Mammary epithelial cell (primary cell): ENCODE measurements at regions of chr12 and their contacts with region 1.

Region 1: DNA sequence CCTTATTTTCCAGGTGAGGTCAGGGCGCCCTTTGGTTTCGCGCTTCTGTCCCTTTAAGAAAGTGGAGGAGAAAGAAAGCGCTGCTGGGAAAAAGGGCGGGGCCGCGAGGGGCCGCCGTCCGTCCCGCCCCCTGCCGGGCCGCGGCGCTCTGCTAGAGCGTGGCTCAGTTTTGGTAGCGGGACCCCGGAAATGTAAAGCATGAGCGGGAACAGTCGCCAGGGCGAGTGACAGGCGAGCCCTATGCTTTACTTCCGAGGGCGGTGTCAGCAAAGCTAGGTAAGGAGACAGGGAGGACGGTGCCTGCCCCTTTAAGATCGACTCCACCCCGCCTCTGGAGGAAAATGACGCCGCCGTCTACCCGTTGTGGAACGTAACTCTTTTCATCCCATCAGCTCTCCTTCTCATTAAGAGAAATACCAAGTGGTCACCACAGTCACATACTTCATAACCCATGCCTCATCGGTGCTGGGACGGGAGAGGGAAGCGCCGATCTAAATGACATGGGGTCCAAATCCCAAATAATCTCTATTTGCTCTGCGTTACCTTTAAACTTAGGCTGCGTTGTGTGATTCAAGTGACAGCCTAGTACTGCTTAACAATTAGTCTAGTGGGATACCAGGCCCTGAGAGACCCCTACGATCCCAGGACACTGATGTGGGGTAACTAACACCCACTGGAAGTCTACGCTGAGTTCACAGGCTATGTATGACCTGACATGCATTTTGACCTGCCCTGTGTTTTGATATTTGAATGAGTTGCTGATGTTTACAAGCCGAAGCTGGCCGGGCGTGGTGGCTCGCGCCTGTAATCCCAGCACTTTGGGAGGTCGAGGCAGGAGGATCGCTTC is at the start of gene ETFBKMT:
- DNase-seq: peak; percentile 96
- H3K4me3 ChIP-seq: peak within 1 kb of the TSS; percentile 68 to 81 (median 75)
- H3K27ac ChIP-seq: peak within 1 kb of the TSS; percentile 92
- H3K4me1 ChIP-seq: peaks cover 7% of the 10 kb centered on the region
- H3K27me3 ChIP-seq: no peaks in the 10 kb centered on the region
- CTCF ChIP-seq: peak in 1 of 2 donors; percentile 45
- total RNA-seq, gene ETFBKMT: 2.1 to 2.5 TPM

Region 2: DNA sequence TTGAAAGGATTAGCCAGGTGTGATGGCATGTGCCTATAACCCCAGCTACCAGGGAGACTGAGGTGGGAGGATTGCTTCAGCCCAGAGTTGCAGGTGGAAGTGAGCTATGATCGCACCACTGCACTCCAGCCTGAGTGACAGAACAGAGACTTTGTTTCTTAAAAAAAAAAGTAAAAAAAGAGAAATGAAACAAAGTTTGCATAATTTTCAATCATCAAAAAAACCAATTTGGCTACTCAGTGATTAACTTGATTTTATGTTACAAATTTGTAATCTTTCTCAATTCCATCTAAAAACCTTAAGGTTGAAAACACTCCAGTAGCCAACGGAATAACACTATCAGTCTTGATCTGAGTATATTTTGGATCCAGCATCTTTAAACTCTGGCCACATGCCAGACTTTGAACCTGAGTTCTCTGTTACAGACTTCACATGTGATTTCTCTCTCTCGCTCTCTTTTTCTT is 55.7 kb before region 1 on chr12:
- CTCF ChIA-PET with region 1: no interaction called
- dilution Hi-C with region 1: no loop called
- in situ Hi-C with region 1: no loop called
- intact Hi-C with region 1: no loop called
- DNase-seq: no peak
- H3K4me3 ChIP-seq: no peak overlapping the region
- H3K27ac ChIP-seq: no peak overlapping the region
- H3K4me1 ChIP-seq: no peaks in the 10 kb centered on the region
- H3K27me3 ChIP-seq: no peaks in the 10 kb centered on the region
- CTCF ChIP-seq: no peak

Region 3: DNA sequence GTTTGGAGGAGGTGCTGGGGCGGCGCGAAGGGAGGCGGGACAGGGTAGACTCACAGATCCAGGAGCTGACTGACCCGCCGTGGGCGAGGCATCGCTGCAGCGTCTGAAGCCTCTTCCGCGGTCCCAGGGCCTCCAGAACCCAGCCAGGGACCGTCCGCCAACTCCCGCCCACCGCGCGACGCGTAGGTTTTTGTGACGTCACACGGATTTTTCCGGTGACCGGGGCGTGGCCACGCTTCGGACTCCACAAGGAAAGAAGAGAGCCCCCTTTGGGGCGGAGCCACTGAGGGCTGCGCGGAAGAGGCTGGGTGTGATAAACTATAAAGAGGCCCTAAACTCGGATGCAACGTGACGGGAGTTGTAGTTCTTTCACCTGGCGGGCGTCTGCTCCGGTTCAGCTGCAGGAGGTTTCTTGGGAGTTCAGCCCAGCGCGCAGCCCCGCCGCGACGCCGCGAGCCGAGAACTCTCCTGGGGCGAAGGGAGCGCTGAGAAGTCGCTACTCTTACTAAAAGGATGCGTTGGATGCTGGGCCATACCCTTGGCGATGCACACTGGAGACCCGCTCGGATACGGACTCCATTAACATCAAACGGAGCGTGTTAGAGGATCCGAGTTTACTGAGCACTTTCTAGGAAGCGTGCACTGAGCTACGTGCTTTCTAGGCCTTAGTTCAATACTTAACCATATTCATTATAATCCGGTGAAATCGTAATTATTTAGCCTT is 69.8 kb after region 1 on chr12 and contains the start of gene AMN1:
- CTCF ChIA-PET with region 1: no interaction called
- dilution Hi-C with region 1: no loop called
- in situ Hi-C with region 1: no loop called
- intact Hi-C with region 1: loop called (anchors 2 kb)
- DNase-seq: peak; percentile 100
- H3K4me3 ChIP-seq: peak within 1 kb of the TSS; percentile 60 to 71 (median 62)
- H3K27ac ChIP-seq: peak within 1 kb of the TSS; percentile 82
- H3K4me1 ChIP-seq: peaks cover 20% of the 10 kb centered on the region
- H3K27me3 ChIP-seq: no peaks in the 10 kb centered on the region
- CTCF ChIP-seq: no peak
- total RNA-seq, gene AMN1: 5.0 to 5.7 TPM

Region 4: GRCh38 chr12:31959161-31959700 is 299.9 kb after region 1 on chr12 and contains the start of gene RESF1:
- CTCF ChIA-PET with region 1: no interaction called
- dilution Hi-C with region 1: no loop called
- in situ Hi-C with region 1: loop called in 1 of 2 experiments (anchors 25 kb)
- intact Hi-C with region 1: loop called (anchors 1 kb)
- DNase-seq: peak; percentile 83
- H3K4me3 ChIP-seq: peak within 1 kb of the TSS; percentile 74 to 95 (median 84)
- H3K27ac ChIP-seq: peak within 1 kb of the TSS; percentile 67
- H3K4me1 ChIP-seq: peaks cover 12% of the 10 kb centered on the region
- H3K27me3 ChIP-seq: no peaks in the 10 kb centered on the region
- CTCF ChIP-seq: no peak
- total RNA-seq, gene RESF1: 21.0 to 21.3 TPM

Region 5: GRCh38 chr12:32302218-32303173 is 643.2 kb after region 1 on chr12:
- CTCF ChIA-PET with region 1: no interaction called
- dilution Hi-C with region 1: no loop called
- in situ Hi-C with region 1: loop called (anchors 10 kb)
- intact Hi-C with region 1: no loop called
- DNase-seq: peak; percentile 8
- H3K4me3 ChIP-seq: no peak overlapping the region
- H3K27ac ChIP-seq: no peak overlapping the region
- H3K4me1 ChIP-seq: no peaks in the 10 kb centered on the region
- H3K27me3 ChIP-seq: no peaks in the 10 kb centered on the region
- CTCF ChIP-seq: peak; percentile 56 to 78

Region 6: DNA sequence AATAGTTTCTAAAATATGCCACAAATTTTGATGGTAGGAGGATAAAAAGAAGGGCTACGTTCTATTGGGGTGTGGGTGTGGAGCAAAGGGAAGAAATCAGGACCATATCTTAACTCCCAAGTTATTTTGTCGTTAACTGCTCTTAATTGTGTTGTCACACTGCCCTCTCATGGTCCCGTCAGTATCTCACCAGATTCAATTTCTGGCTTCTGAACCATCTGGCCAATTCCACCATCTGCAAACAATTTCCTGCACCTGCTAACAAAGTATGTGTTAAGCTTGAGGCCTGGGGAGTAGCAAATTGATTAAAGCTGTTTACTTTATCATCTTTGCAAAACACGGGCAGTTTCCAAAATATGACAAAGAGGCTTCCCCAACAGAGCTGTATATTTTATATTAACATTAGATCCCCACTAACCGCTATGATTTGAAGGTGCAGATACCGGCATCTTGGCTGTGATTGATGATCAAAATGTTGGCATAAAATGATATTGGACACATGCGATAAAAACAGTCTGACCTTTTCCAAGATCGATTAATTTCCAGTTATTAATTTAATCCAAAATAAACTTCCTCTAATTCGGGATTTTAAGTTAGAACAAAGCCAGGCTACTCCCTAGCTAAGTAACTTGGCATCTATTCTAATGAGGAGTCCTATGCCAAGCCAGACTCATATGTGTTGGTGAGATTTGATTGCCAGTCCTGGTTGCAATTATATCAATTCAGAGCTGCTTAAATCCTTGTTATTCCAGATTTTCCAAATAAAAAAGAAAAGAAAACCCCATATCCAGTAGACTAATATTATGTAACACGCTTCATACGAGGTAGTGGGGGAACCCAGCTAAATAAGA is 1012.8 kb after region 1 on chr12:
- CTCF ChIA-PET with region 1: no interaction called
- dilution Hi-C with region 1: no loop called
- in situ Hi-C with region 1: loop called in 1 of 2 experiments (anchors 25 kb)
- intact Hi-C with region 1: no loop called
- DNase-seq: peak; percentile 37
- H3K4me3 ChIP-seq: no peak overlapping the region
- H3K27ac ChIP-seq: no peak overlapping the region
- H3K4me1 ChIP-seq: no peaks in the 10 kb centered on the region
- H3K27me3 ChIP-seq: no peaks in the 10 kb centered on the region
- CTCF ChIP-seq: peak; percentile 53 to 63